Breast epithelium (tissue), 4 donors: ENCODE measurements at regions of chr12 and their contacts with region 1.

Region 1: GRCh38 chr12:118611295-118611694 is 234.9 kb downstream of the SUDS3 start:
- DNase-seq: no peak
- H3K4me3 ChIP-seq: no peak overlapping the region
- H3K27ac ChIP-seq: no peak overlapping the region
- H3K4me1 ChIP-seq: no peaks in the 10 kb centered on the region
- H3K27me3 ChIP-seq: no peaks in the 10 kb centered on the region
- CTCF ChIP-seq: no peak
- POLR2A ChIP-seq: no peak

Region 2: DNA sequence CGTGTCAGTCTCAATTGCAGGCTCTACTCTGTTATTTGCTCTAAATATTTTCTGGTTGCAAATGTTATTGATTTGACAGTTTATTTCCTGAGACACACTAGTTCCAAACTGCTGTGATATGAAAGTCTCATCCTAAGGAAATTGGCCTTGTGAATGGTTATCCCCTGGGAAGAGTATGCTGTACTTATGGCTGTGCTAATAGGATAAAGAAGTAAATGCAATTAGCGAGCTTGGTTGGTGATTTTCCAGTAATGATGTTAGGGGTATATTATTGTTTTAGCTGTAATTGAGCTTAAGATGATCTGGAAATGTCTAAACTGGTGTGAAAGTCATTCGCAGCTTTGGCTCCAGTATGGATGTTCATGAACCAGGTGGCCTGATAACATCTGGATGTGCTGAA is 37.0 kb before region 1 on chr12:
- intact Hi-C with region 1: no loop called
- DNase-seq: no peak
- H3K4me3 ChIP-seq: no peak overlapping the region
- H3K27ac ChIP-seq: no peak overlapping the region
- H3K4me1 ChIP-seq: no peaks in the 10 kb centered on the region
- H3K27me3 ChIP-seq: no peaks in the 10 kb centered on the region
- CTCF ChIP-seq: no peak
- POLR2A ChIP-seq: no peak

Region 3: DNA sequence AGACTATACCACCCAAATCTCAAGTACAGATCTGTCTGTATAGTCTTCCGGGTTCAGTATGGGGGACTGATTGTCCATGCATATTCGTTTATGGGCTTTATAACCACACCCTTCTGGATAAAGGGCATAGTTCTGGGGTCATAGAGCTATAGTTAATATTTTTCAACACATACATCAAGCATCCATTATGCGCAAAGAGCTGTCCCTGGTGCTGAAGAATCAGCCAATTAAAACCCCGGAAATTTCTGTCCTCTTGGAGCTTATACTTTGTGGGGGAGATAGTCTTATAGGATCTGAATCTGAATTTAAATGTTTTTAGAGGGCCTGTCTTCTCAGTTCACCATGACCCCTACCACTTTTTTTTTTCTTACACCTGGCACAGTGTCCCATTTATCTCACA is 21.8 kb after region 1 on chr12:
- intact Hi-C with region 1: loop called (anchors 1 kb)
- DNase-seq: no peak
- H3K4me3 ChIP-seq: no peak overlapping the region
- H3K27ac ChIP-seq: no peak overlapping the region
- H3K4me1 ChIP-seq: no peaks in the 10 kb centered on the region
- H3K27me3 ChIP-seq: peaks cover 0 to 4% of the 10 kb centered on the region in 2 donors
- CTCF ChIP-seq: no peak
- POLR2A ChIP-seq: no peak